ENCODE measurements at regions of chr12 and their contacts with region 1.

Region 1: DNA sequence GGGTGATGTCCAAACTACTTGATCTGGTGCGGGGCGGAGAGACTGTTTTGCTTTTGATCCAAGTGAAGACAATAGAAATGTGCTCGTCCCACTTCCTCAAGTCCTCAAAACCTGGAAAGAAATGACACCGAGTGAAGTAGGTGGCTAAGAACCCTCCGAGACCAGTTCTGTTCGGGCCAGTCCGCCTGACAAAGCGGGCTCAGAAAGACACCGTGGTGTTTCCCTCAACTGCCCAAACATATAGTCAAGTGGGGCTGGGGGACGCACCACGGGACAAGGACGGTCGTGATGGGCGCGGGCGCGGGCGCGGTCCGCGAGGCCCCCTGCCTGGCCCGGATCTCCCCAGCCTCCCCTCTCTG is 1.6 kb downstream of the PHLDA1 start:
- DNase-seq: no peak
- ATAC-seq: no peak

Region 2: GRCh38 chr12:75792687-75793086 is 237.3 kb before region 1 on chr12:
- intact Hi-C with region 1: no loop called
- DNase-seq: no peak
- ATAC-seq: no peak

Region 3: GRCh38 chr12:75954041-75954440 is 75.9 kb before region 1 on chr12:
- intact Hi-C with region 1: no loop called
- DNase-seq: no peak
- ATAC-seq: peak; percentile 96

Region 4: GRCh38 chr12:75994186-75994731 is 35.7 kb before region 1 on chr12:
- intact Hi-C with region 1: loop called (anchors 5 kb)
- DNase-seq: no peak
- ATAC-seq: no peak

Region 5: GRCh38 chr12:76455582-76456345 is 425.8 kb after region 1 on chr12:
- intact Hi-C with region 1: no loop called
- DNase-seq: no peak
- ATAC-seq: peak; percentile 75